H1 (cell line): ENCODE measurements at regions of chr3 and their contacts with region 1.

Region 1: GRCh38 chr3:131794766-131795388 is 239.9 kb downstream of the CPNE4 start:
- DNase-seq: peak; percentile 27 to 54
- H3K4me3 ChIP-seq: no peak overlapping the region
- H3K27ac ChIP-seq: no peak overlapping the region
- H3K4me1 ChIP-seq: peaks cover 2 to 16% (median 13%) of the 10 kb centered on the region in 4 experiments; a peak in 5 of 7 replicates
- H3K27me3 ChIP-seq: no peaks in the 10 kb centered on the region
- CTCF ChIP-seq: peak; percentile 54 to 98 (median 90)
- EP300 ChIP-seq: no peak
- POLR2A ChIP-seq: no peak
- RAD21 ChIP-seq: peak; percentile 91 to 93

Region 2: DNA sequence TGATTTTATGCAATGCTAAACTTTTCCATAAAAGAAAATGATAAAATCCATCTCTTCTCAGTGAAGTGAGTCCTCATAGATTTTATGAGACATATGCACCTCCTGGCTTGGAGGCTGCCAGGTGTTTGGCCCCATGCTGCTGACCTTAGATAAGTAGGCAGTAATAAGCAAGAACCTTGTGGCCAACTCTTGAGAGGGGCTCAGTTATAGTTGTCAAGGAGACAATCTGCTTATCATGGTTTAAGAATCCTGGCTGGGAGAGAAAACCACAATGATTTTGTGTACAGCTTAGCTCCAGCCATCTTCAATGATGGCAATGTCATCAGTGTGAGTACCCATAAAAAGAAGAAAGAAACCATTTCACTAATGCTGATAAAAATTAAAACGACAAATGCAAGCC is 12.1 kb before region 1 on chr3:
- CTCF ChIA-PET with region 1: interaction called, 18 read pairs
- POLR2A ChIA-PET with region 1: interaction called, 3 read pairs
- DNase-seq: no peak
- H3K4me3 ChIP-seq: no peak overlapping the region
- H3K27ac ChIP-seq: no peak overlapping the region
- H3K4me1 ChIP-seq: no peaks in the 10 kb centered on the region; a peak in 1 of 7 replicates
- H3K27me3 ChIP-seq: no peaks in the 10 kb centered on the region; a peak in 2 of 7 replicates
- CTCF ChIP-seq: no peak
- EP300 ChIP-seq: no peak
- POLR2A ChIP-seq: no peak
- RAD21 ChIP-seq: no peak

Region 3: DNA sequence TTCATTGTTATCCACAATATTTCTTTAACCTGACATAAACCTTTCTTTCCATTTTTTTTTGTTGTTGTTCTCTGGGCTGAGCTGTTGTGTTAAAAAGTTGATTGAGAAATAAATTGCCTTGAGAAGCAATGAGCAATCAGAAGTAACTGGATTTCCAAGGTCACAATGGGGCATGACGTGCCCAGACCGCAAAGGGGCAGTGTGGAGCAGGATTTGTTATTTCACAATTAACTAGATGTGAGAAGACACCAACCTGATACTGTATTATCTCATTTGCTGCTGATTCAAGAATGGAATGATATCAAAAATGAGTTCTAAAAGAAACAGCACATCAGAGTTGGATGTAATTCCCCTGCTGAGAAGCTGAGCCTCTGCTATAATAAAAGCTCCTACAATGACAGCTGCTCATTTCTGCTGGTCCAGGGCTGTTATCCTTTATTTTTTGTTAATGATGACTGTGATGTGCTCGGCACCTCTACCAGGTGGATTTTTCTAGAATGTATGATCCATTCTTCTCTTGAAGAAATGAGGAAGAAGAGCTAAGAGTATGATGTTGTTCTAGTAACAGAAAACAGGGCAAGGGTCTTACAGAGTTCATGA is 211.8 kb after region 1 on chr3:
- CTCF ChIA-PET with region 1: interaction called, 83 read pairs
- POLR2A ChIA-PET with region 1: no interaction called
- DNase-seq: peak in 1 of 2 experiments; percentile 66
- H3K4me3 ChIP-seq: no peak overlapping the region
- H3K27ac ChIP-seq: no peak overlapping the region
- H3K4me1 ChIP-seq: peaks cover 0 to 7% (median 4%) of the 10 kb centered on the region in 4 experiments; a peak in 5 of 7 replicates
- H3K27me3 ChIP-seq: no peaks in the 10 kb centered on the region
- CTCF ChIP-seq: peak; percentile 69 to 83 (median 81)
- EP300 ChIP-seq: no peak
- POLR2A ChIP-seq: no peak
- RAD21 ChIP-seq: peak; percentile 53 to 75

Region 4: DNA sequence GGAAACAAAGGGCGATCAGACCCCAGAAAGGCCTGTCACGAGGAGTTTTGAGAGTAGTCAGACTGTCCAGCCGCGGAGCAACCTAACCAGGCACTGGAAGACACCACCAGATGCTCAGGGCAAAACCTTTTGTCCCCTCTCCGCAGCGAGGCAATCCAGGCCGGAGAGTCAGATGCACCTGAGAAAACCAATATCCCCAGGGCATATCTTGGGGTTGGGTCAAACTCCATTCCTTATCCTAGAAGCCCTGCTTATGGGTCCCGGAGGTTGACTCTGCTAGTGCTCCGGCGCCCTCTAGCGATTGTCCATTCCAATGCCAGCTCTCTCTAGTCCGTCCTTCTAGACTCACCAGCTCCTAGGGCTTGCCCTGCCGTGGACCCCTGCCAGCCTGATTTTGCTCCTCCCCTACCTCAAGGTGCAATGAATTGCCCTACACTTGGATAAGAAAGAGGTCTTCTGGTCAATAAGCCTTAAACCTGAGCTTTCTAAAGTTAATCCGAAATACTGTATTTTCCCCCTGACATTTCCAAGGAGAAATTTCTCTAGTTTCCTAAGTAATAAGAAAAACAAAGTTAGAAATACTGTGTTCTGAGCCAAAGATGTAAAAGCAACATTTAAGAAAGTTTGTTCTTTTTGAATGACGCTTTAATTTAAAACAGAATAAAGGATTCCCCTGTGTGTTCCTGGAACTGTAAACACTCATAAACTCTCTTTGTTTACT is 234.5 kb after region 1 on chr3:
- CTCF ChIA-PET with region 1: interaction called, 76 read pairs
- POLR2A ChIA-PET with region 1: no interaction called
- DNase-seq: peak; percentile 91 to 94
- H3K4me3 ChIP-seq: no peak overlapping the region
- H3K27ac ChIP-seq: no peak overlapping the region
- H3K4me1 ChIP-seq: peaks cover 0 to 2% (median 0%) of the 10 kb centered on the region in 4 experiments; a peak in 3 of 7 replicates
- H3K27me3 ChIP-seq: peaks cover 0 to 14% (median 6%) of the 10 kb centered on the region in 4 experiments; a peak in 6 of 7 replicates
- CTCF ChIP-seq: peak; percentile 85 to 96 (median 96)
- EP300 ChIP-seq: no peak
- POLR2A ChIP-seq: no peak
- RAD21 ChIP-seq: peak; percentile 99

Region 5: DNA sequence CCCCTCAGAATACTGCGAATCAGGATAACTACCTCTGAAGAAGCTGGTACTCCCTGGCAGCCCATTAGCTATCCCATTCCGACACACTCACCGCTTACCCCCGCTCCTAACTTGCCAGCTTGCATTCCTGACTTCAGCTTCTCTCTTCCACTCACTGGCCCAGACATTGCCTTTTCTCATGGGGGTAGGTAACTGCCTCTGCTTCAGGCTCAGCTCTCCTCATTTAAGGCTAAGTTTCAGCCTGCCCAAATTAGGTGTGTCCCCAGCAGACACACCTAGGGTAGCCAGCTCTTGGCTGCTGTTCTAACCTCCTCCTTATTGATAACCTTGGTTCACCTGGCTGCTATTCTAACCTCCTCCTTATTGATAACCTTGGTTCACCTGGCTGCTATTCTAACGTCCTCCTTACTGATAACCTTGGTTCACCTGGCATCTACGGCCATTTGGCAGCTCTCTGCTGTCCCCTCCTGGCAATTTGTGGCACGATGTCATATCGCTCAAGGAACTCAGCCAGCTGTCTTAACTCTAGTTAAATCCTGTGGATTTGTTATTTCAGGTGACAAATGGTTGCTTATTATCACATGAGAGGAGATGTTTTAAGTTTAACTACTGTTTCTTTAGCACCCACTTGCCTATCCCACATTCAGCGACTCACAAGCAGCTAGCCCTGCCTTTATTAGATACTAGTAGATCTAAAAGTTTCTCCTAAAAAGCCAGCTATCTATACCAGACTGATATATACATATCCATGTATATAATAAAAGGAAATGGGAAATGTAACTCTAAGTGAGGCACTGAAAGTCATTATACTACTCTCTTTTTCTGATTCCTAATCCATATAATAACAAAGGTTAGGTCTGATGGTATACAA is 415.8 kb after region 1 on chr3:
- CTCF ChIA-PET with region 1: interaction called, 26 read pairs
- POLR2A ChIA-PET with region 1: no interaction called
- DNase-seq: peak; percentile 49 to 84
- H3K4me3 ChIP-seq: no peak overlapping the region
- H3K27ac ChIP-seq: no peak overlapping the region
- H3K4me1 ChIP-seq: peaks cover 0 to 4% (median under 1%) of the 10 kb centered on the region in 4 experiments; a peak in 2 of 7 replicates
- H3K27me3 ChIP-seq: peaks cover 27 to 42% (median 40%) of the 10 kb centered on the region in 4 experiments
- CTCF ChIP-seq: peak; percentile 88 to 93 (median 90)
- EP300 ChIP-seq: no peak
- POLR2A ChIP-seq: no peak
- RAD21 ChIP-seq: peak; percentile 91 to 95